ENCODE measurements at regions of chr1 and their contacts with region 1.

Region 1: DNA sequence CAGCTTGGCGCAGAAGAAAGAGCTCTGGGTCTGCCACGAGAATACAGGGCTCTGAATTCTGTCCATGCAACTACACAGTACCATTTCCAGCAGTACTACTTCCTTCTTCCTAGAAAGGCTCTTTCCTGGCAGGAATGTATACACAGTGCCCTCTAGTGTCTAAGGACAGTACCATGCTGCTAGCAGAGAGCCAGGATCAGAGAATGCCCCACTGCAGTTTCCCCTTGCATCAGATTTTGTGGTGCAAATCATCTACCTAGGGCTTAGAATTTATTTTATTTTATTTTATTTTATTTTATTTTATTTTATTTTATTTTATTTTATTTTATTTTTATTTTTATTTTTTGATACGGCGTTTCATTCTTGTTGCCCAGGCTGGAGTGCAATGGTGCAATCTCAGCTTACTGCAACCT is 50.8 kb downstream of the PAX7 start:
- DNase-seq: peak; percentile 82
- ATAC-seq: peak; percentile 99
- H3K4me3 ChIP-seq: no peak overlapping the region
- H3K27ac ChIP-seq: no peak overlapping the region
- H3K4me1 ChIP-seq: peaks cover 3% of the 10 kb centered on the region; the same call in 1 of the 2 replicates
- H3K27me3 ChIP-seq: peaks cover 5% of the 10 kb centered on the region; the same call in 1 of the 2 replicates
- CTCF ChIP-seq: peak; percentile 78

Region 2: GRCh38 chr1:18597160-18598042 is 84.0 kb before region 1 on chr1:
- CTCF ChIA-PET with region 1: interaction called, 15 read pairs
- POLR2A ChIA-PET with region 1: no interaction called
- intact Hi-C with region 1: loop called (anchors 1 kb)
- DNase-seq: peak; percentile 63
- ATAC-seq: peak; percentile 98
- H3K4me3 ChIP-seq: no peak overlapping the region
- H3K27ac ChIP-seq: no peak overlapping the region
- H3K4me1 ChIP-seq: no peaks in the 10 kb centered on the region
- H3K27me3 ChIP-seq: peaks cover 25% of the 10 kb centered on the region
- CTCF ChIP-seq: peak; percentile 97

Region 3: GRCh38 chr1:18643154-18644012 is 38.0 kb before region 1 on chr1:
- CTCF ChIA-PET with region 1: no interaction called
- POLR2A ChIA-PET with region 1: no interaction called
- intact Hi-C with region 1: loop called (anchors 5 kb)
- DNase-seq: peak; percentile 26
- ATAC-seq: peak; percentile 55
- H3K4me3 ChIP-seq: peak overlapping the region; percentile 58
- H3K27ac ChIP-seq: no peak overlapping the region
- H3K4me1 ChIP-seq: no peaks in the 10 kb centered on the region
- H3K27me3 ChIP-seq: peaks cover 97% of the 10 kb centered on the region
- CTCF ChIP-seq: no peak

Region 4: GRCh38 chr1:18668796-18669404 is 12.5 kb before region 1 on chr1:
- CTCF ChIA-PET with region 1: interaction called, 11 read pairs
- POLR2A ChIA-PET with region 1: no interaction called
- intact Hi-C with region 1: no loop called
- DNase-seq: peak; percentile 95
- ATAC-seq: peak; percentile 88
- H3K4me3 ChIP-seq: peak overlapping the region; percentile 52; the same call in 1 of the 2 replicates
- H3K27ac ChIP-seq: peak overlapping the region; percentile 99
- H3K4me1 ChIP-seq: peaks cover 69% of the 10 kb centered on the region
- H3K27me3 ChIP-seq: no peaks in the 10 kb centered on the region
- CTCF ChIP-seq: no peak

Region 5: DNA sequence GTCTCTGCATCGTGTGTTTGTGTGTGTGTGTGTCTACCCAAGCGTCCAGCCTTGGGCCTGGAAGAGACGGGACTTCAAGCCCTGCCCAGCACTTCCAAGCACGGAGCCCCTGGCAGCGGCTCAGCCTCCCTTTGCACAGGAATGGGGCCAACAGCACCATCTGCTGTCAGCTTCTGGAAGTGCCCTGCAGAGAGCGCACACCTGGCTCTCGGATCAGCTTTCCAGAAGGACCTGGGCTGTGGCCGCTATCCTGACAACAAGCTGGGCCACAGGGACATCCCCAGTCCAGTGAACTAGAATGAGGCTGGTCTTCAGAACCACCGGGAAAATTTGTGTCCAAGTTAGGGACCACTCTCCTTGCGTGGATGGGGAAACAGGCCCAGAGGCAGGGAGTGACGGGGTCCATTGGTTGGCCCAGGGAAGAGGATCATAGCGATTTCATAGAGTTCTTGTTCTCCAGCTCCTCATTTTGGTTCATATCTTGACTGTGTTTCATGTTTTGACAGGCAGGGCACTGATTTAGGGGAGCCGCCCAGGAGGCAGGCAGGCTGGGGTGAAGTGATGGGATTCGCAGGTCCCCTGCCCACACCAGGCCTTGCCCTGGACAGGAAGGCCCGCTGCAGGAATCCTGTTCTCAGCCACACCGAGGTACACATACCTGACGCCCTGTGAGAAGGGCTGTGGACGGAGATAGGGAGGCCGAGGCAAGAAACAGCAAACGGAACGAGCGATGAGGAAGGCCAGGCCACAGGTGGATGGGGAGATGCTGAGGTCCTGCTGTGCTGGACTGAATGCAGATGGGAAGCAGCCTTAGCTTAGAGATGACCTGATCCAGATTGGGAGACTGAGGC is 139.6 kb after region 1 on chr1:
- CTCF ChIA-PET with region 1: no interaction called
- POLR2A ChIA-PET with region 1: no interaction called
- intact Hi-C with region 1: loop called (anchors 2 kb)
- DNase-seq: peak; percentile 84
- ATAC-seq: peak; percentile 98
- H3K4me3 ChIP-seq: no peak overlapping the region
- H3K27ac ChIP-seq: no peak overlapping the region
- H3K4me1 ChIP-seq: no peaks in the 10 kb centered on the region
- H3K27me3 ChIP-seq: peaks cover 19% of the 10 kb centered on the region
- CTCF ChIP-seq: peak; percentile 92

Measured in PC-3 (cell line).